ENCODE measurements at regions of chr10 and their contacts with region 1.

Region 1: DNA sequence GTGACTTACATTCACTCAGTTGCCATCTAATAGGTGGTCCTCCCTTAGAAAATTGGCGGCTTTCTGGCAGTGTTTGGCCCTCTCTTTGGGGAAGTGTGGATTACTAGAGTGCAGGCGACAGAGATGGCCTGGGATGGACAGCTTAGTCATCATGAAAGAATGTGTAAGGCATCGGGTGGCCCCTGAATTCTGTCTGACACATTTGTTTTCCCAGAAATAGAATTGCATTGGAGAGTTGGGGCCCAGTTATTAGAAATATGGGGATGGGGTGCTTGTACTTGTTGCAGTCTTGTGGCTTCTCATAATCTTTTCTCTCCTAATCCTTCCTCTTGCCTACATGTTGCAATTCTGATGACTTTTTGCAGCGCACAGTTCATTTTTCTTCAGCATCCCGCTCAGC is 13.8 kb downstream of the TCF7L2 start:
- DNase-seq: no peak
- ATAC-seq: no peak
- H3K4me3 ChIP-seq: no peak overlapping the region
- H3K27ac ChIP-seq: no peak overlapping the region
- H3K4me1 ChIP-seq: peaks cover 4% of the 10 kb centered on the region
- H3K27me3 ChIP-seq: no peaks in the 10 kb centered on the region
- CTCF ChIP-seq: no peak
- POLR2A ChIP-seq: no peak

Region 2: GRCh38 chr10:113121153-113121552 is 157.3 kb after region 1 on chr10:
- intact Hi-C with region 1: loop called (anchors 5 kb)
- DNase-seq: no peak
- ATAC-seq: no peak
- H3K4me3 ChIP-seq: no peak overlapping the region
- H3K27ac ChIP-seq: no peak overlapping the region
- H3K4me1 ChIP-seq: peaks cover 2% of the 10 kb centered on the region
- H3K27me3 ChIP-seq: no peaks in the 10 kb centered on the region
- CTCF ChIP-seq: no peak
- POLR2A ChIP-seq: no peak

Region 3: GRCh38 chr10:113169853-113170460 is 206.1 kb after region 1 on chr10:
- intact Hi-C with region 1: no loop called
- DNase-seq: no peak
- ATAC-seq: no peak
- H3K4me3 ChIP-seq: no peak overlapping the region
- H3K27ac ChIP-seq: no peak overlapping the region
- H3K4me1 ChIP-seq: no peaks in the 10 kb centered on the region
- H3K27me3 ChIP-seq: no peaks in the 10 kb centered on the region
- CTCF ChIP-seq: no peak
- POLR2A ChIP-seq: no peak

Region 4: DNA sequence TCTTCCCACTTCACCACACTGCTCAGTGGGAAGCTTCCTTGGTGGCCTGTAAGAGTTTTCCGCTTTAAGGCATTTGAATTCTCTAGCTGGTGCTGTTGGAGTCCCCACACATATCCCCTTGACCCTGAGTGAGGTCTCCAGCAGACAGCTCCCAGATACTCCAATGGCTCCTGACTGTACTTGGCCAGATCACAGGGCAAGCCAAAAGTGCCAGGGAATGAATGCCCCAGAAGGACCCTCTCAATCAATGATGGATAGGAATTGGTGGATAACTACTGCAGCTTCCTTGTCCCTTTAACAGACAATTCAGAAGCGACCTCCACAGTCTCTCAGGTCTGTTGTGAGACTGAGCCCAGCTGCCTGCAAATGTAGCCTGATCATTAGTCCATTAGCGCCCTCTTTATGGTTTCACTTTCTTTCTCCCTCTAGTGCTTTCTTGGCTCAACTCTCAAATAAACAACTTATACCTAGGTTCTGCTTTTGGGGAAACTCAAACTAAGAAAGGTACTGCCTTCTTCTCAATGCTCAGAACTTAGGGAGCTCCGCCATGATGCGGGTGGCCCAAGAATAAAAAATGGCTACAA is 269.2 kb after region 1 on chr10:
- intact Hi-C with region 1: no loop called
- DNase-seq: no peak
- ATAC-seq: no peak
- H3K4me3 ChIP-seq: no peak overlapping the region
- H3K27ac ChIP-seq: no peak overlapping the region
- H3K4me1 ChIP-seq: no peaks in the 10 kb centered on the region
- H3K27me3 ChIP-seq: no peaks in the 10 kb centered on the region
- CTCF ChIP-seq: no peak
- POLR2A ChIP-seq: no peak

Region 5: DNA sequence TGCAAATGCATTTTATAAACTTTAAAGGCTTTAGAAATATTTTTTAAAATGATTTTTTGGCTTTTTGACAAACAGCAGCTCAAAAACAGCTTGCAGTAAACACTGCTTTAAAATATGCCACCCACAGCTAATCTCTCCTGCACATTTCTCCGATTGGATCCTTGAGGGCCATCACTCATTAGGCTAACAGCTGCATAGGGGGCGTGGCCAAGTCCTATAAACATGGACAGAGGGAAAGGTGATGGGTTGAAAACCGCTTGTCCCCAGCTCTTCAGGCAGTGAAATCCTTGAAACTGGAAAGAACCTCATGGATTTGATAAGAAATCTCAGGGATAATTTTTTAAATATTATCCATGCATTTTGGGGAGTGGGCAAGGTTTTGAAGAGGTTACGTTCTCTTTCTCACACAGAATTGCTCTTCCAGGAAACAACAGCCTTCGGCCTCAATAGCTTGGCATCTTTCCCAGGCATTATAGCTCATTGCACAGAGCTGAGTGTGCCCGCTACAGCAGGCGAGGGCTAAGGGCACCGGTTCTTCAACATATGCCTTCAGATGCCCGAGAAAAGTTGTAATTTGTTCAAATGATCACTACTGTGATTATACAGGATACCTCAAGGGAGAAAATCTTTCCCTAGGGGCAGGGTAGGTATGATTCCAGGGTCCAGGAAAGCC is 789.3 kb after region 1 on chr10:
- intact Hi-C with region 1: no loop called
- DNase-seq: peak in 2 of 4 donors; percentile 22 to 27
- ATAC-seq: no peak
- H3K4me3 ChIP-seq: no peak overlapping the region
- H3K27ac ChIP-seq: peak overlapping the region in 2 of 4 donors; percentile 7 to 78
- H3K4me1 ChIP-seq: peaks cover 6% of the 10 kb centered on the region
- H3K27me3 ChIP-seq: no peaks in the 10 kb centered on the region
- CTCF ChIP-seq: no peak
- POLR2A ChIP-seq: no peak